ENCODE measurements at regions of chr17 and their contacts with region 1.

Region 1: DNA sequence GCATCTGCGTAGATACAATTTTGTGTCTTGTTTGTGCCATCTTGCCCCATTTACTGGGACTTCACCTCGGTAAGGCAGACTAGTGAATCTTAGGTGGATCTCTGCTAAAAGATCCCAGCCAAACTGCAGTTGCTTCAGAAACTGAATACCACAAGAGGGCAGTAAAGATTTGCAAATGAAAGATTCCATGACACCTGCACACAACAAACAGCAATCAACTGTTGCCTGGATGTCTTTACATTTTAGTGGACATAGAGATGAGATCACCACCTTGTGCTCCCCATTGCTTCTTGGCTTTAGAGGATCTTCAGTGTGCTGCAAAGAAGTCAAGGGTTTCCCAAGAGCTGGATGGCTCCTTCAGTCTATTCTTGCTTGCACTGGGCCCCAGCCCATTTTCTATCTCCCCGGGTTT is 119.2 kb upstream of the CACNG5 start:
- DNase-seq: peak in 1 of 4 donors; percentile 62
- ATAC-seq: peak; percentile 55
- H3K4me3 ChIP-seq: no peak overlapping the region
- H3K27ac ChIP-seq: no peak overlapping the region
- H3K4me1 ChIP-seq: no peaks in the 10 kb centered on the region
- H3K27me3 ChIP-seq: no peaks in the 10 kb centered on the region
- CTCF ChIP-seq: peak; percentile 56 to 66

Region 2: GRCh38 chr17:66900126-66901010 is 184.6 kb after region 1 on chr17:
- intact Hi-C with region 1: loop called in 1 of 2 experiments (anchors 5 kb)
- DNase-seq: no peak
- ATAC-seq: no peak
- H3K4me3 ChIP-seq: no peak overlapping the region
- H3K27ac ChIP-seq: no peak overlapping the region
- H3K4me1 ChIP-seq: peaks cover 2% of the 10 kb centered on the region in 2 donors
- H3K27me3 ChIP-seq: peaks cover 0 to 7% of the 10 kb centered on the region in 2 donors
- CTCF ChIP-seq: no peak

Measured in left lung (tissue), 14 donors.